Psoas muscle (tissue), 8 donors: ENCODE measurements at regions of chr1 and their contacts with region 1.

Region 1: GRCh38 chr1:222413436-222413835 is 134.5 kb downstream of the HHIPL2 start:
- DNase-seq: no peak
- ATAC-seq: no peak
- H3K4me3 ChIP-seq: no peak overlapping the region
- H3K27ac ChIP-seq: no peak overlapping the region
- H3K4me1 ChIP-seq: no peaks in the 10 kb centered on the region
- H3K27me3 ChIP-seq: no peaks in the 10 kb centered on the region
- CTCF ChIP-seq: no peak

Region 2: DNA sequence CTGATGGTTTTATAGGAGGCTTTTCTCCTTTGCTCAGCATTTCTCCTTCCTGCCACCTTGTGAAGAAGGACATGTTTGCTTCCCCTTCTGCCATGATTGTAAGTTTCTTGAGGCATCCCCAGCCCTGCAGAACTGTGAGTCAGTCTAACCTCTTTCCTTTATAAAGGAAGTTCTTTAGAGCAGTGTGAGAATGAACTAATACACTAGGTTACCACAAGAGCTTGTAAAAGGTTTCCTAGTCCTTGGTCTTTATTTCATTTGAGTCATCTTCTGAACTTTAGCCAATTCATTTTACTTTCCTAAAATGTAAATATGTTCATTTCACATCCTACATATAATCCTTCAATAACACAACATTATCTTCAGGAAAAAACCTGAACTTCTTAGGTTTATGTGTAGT is 230.8 kb before region 1 on chr1:
- intact Hi-C with region 1: no loop called
- DNase-seq: no peak
- ATAC-seq: no peak
- H3K4me3 ChIP-seq: no peak overlapping the region
- H3K27ac ChIP-seq: no peak overlapping the region
- H3K4me1 ChIP-seq: no peaks in the 10 kb centered on the region
- H3K27me3 ChIP-seq: no peaks in the 10 kb centered on the region
- CTCF ChIP-seq: no peak

Region 3: DNA sequence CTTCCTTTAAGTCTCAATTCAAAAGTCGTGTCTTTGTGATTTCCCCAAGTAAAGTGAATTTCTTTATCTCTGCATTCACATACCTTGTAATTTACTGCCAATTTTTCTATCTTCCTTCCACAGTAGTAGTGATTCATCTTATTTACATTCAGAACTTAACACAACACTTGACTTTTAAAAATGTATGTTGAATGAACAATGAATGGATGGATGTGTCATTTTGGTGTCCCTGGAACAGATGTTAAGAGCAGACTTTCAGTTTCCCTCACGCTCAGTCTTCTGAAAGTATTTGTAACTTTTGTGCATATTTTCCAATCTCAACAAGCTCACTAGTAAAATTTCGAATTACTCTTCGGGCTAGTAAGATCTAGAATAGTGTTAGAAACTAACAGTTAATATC is 217.6 kb before region 1 on chr1:
- intact Hi-C with region 1: loop called in 1 of 2 experiments (anchors 10 kb)
- DNase-seq: no peak
- ATAC-seq: no peak
- H3K4me3 ChIP-seq: no peak overlapping the region
- H3K27ac ChIP-seq: no peak overlapping the region
- H3K4me1 ChIP-seq: no peaks in the 10 kb centered on the region
- H3K27me3 ChIP-seq: no peaks in the 10 kb centered on the region
- CTCF ChIP-seq: no peak